ENCODE measurements at regions of chr6 and their contacts with region 1.

Region 1: DNA sequence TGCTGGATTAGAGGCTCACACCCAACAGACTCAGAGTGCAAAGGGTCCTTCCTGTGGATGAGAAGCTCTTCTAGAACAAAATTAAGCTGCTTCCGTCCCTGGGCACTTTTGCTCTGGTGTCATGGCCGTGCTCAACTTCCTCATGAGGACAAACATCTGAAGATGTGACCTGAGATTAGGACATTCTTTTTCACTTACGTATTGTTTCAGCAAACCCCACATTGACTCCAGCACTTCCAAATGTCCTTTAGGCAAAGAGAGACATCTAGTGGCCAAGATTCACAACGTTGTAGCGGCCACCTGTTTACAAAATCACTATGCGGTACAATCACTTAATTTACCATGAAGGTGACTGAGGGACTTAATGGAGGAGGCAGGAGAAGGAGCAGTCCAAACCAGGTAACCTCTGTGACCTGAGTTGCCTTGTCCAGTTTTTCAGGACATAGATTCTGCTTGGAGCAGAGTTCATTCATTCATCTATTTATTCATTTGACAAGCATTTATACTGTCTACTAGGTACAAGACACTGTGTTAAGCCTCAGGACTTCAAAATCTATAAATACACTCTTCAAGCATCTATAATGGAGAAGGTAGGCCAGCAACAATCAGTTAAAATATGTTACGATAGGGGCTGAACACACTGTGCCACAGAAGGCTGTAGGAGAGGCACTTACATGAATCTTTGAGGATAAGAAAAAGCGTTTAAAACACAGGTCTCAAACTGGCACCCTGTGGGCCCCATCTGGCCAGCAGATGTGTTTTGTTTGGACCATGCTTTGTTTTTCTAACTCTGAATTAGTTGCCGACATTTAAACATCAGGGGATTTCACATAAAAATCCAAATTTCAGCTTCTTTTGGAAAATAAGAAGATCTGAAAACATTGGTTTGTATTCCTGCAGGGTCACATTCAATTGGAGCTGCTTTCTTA is 5.6 kb upstream of the ADGRF1 start:
- DNase-seq: peak; percentile 75
- H3K4me3 ChIP-seq: no peak overlapping the region
- H3K27ac ChIP-seq: peak overlapping the region; percentile 37
- H3K4me1 ChIP-seq: peaks cover 44% of the 10 kb centered on the region
- H3K27me3 ChIP-seq: no peaks in the 10 kb centered on the region
- CTCF ChIP-seq: peak; percentile 83 to 86

Region 2: DNA sequence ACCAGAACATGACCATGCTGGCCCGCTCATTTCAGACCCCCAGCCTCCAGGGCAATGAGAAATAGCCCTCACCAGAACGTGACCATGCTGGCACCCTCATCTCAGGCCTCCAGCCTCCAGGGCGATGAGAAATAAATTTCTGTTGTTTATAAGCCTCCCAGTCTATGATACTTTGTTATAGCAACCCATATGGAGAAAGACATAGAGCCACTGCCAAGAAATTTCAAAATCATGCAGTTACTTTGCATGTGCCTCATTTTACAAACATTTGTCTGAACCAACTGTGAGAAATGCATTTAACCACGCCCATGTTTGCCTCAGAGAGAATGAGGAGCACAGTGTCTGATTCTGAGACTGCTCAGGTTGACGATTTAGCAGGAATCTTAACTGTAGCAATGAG is 410.6 kb before region 1 on chr6:
- CTCF ChIA-PET with region 1: no interaction called
- dilution Hi-C with region 1: no loop called
- in situ Hi-C with region 1: no loop called
- intact Hi-C with region 1: loop called (anchors 5 kb)
- DNase-seq: peak; percentile 92
- H3K4me3 ChIP-seq: no peak overlapping the region
- H3K27ac ChIP-seq: peak overlapping the region; percentile 57
- H3K4me1 ChIP-seq: peaks cover 24% of the 10 kb centered on the region
- H3K27me3 ChIP-seq: no peaks in the 10 kb centered on the region
- CTCF ChIP-seq: no peak

Region 3: GRCh38 chr6:46781478-46782378 is 266.0 kb before region 1 on chr6:
- CTCF ChIA-PET with region 1: no interaction called
- dilution Hi-C with region 1: no loop called
- in situ Hi-C with region 1: no loop called
- intact Hi-C with region 1: loop called (anchors 2 kb)
- DNase-seq: peak; percentile 57
- H3K4me3 ChIP-seq: no peak overlapping the region
- H3K27ac ChIP-seq: no peak overlapping the region
- H3K4me1 ChIP-seq: no peaks in the 10 kb centered on the region
- H3K27me3 ChIP-seq: no peaks in the 10 kb centered on the region
- CTCF ChIP-seq: peak; percentile 70 to 78

Region 4: GRCh38 chr6:46848684-46849360 is 198.9 kb before region 1 on chr6:
- CTCF ChIA-PET with region 1: no interaction called
- dilution Hi-C with region 1: no loop called
- in situ Hi-C with region 1: loop called (anchors 5 kb)
- intact Hi-C with region 1: loop called (anchors 1 kb)
- DNase-seq: peak; percentile 73
- H3K4me3 ChIP-seq: no peak overlapping the region
- H3K27ac ChIP-seq: no peak overlapping the region
- H3K4me1 ChIP-seq: peaks cover 15% of the 10 kb centered on the region
- H3K27me3 ChIP-seq: no peaks in the 10 kb centered on the region
- CTCF ChIP-seq: peak; percentile 69 to 96

Region 5: DNA sequence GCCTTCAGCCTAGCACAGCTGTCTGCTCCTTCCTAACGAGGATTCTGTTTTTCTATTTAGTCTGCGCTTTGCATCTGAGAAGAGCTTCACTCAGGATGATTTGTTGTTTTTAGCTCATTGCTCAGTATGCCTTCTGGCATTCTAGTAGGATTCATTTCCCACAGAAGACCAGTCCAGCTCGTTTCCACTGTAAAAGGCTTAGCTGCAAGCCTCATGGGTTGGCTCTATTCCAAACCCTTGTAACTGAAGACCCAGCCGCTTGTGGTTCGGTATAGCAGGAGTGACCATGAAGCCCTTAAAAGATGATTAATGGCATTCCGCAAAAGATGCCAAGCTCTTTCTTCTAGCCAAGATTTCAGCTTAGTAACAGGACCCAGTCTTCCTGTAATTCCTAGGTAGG is 12.8 kb before region 1 on chr6:
- CTCF ChIA-PET with region 1: interaction called, 6 read pairs
- dilution Hi-C with region 1: no loop called
- in situ Hi-C with region 1: no loop called
- intact Hi-C with region 1: loop called (anchors 1 kb)
- DNase-seq: peak; percentile 99
- H3K4me3 ChIP-seq: peak overlapping the region in 2 of 3 experiments; percentile 28 to 31
- H3K27ac ChIP-seq: peak overlapping the region; percentile 41
- H3K4me1 ChIP-seq: peaks cover 24% of the 10 kb centered on the region
- H3K27me3 ChIP-seq: no peaks in the 10 kb centered on the region
- CTCF ChIP-seq: no peak